Caco-2 (cell line): ENCODE measurements at regions of chr11 and their contacts with region 1.

Region 1: GRCh38 chr11:123995119-123995518 is at the start of gene OR10G6:
- DNase-seq: no peak
- H3K4me3 ChIP-seq: no peak within 1 kb of the TSS
- H3K4me3 Mint-ChIP-seq: no peak within 1 kb of the TSS
- H3K27ac Mint-ChIP-seq: no peak within 1 kb of the TSS
- H3K4me1 ChIP-seq: peaks cover 8% of the 10 kb centered on the region; the same call in 1 of the 2 replicates
- H3K4me1 Mint-ChIP-seq: no peaks in the 10 kb centered on the region
- H3K27me3 ChIP-seq: 0 out of 2 replicates have a peak, but pooled peaks cover 2% of the 10 kb centered on the region
- H3K27me3 Mint-ChIP-seq: peaks cover 3% of the 10 kb centered on the region
- CTCF ChIP-seq: no peak
- total RNA-seq, gene OR10G6: not detected in 2 replicates

Region 2: DNA sequence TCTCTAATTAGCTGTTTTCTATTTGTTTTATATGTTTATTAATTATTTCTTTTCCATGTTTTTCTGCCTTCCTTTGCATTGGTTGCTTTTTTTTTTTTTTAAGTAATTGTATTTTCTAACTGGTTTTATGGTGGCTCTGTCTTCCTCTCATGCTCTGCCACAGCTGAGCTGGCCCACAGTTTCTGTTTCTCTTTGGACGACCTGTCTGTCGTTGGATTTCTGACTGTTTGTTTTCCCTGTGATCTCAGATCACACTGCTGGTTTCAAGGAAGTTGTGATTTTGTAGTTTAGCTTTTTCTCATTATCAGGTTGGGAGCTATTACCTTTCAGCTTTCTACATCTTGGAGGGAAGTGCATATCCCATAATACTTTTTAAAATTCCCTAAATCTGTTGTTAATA is 173.1 kb before region 1 on chr11:
- CTCF ChIA-PET with region 1: no interaction called
- POLR2A ChIA-PET with region 1: no interaction called
- intact Hi-C with region 1: loop called (anchors 1 kb)
- DNase-seq: peak in 1 of 2 experiments; percentile 44
- H3K4me3 ChIP-seq: no peak overlapping the region
- H3K4me3 Mint-ChIP-seq: peak overlapping the region; percentile 54
- H3K27ac Mint-ChIP-seq: peak overlapping the region; percentile 91
- H3K4me1 ChIP-seq: peaks cover 24% of the 10 kb centered on the region
- H3K4me1 Mint-ChIP-seq: peaks cover 19% of the 10 kb centered on the region
- H3K27me3 ChIP-seq: no peaks in the 10 kb centered on the region
- H3K27me3 Mint-ChIP-seq: no peaks in the 10 kb centered on the region
- CTCF ChIP-seq: no peak

Region 3: DNA sequence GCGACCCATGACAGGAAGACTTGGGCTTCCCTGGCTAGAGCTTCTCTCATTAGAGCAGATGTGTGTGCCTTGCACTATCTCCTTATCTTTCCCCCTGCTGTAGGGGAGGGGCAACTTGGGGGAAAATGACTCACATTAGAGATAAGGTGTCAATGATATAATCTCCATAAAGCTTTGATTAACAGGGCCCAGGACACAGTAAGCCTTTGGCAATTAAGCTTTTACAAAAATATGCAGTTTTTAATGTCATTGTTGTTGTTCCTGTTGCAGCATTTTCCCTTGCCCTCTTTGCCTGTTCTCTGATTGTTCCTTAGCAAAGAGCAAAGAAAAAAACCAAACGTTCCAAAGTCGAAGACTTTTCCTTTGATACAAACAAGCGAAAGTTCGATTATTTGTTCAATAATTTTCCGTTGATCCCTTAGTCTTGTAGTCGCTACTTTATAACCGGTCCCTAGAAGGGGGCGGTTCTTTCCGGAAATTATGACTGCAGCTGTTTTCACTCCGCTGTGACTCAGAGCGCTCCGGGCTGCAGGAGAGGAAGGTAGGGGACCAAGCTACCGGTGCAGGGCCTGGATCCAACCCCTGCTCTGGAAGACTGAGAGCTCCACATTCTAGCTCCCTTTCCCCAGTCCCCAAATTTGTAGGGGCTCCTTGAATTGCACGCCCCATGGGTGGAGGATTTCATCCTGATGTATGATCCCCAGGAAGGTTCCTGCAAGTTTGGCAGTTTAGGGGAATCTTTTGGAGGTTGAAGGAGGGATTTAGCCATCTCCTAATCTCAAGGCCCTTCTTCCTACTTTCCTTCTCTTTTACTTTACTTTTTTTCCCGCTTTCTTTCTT is 120.0 kb after region 1 on chr11 and contains the start of gene VWA5A:
- CTCF ChIA-PET with region 1: no interaction called
- POLR2A ChIA-PET with region 1: no interaction called
- intact Hi-C with region 1: no loop called
- DNase-seq: peak; percentile 77 to 81
- H3K4me3 ChIP-seq: no peak within 1 kb of the TSS
- H3K4me3 Mint-ChIP-seq: peak within 1 kb of the TSS; percentile 54
- H3K27ac Mint-ChIP-seq: no peak within 1 kb of the TSS
- H3K4me1 ChIP-seq: peaks cover 5% of the 10 kb centered on the region; the same call in 1 of the 2 replicates
- H3K4me1 Mint-ChIP-seq: peaks cover 7% of the 10 kb centered on the region
- H3K27me3 ChIP-seq: no peaks in the 10 kb centered on the region
- H3K27me3 Mint-ChIP-seq: peaks cover 14% of the 10 kb centered on the region
- CTCF ChIP-seq: no peak
- total RNA-seq, gene VWA5A: 1.3 and 1.6 TPM in 2 replicates

Region 4: DNA sequence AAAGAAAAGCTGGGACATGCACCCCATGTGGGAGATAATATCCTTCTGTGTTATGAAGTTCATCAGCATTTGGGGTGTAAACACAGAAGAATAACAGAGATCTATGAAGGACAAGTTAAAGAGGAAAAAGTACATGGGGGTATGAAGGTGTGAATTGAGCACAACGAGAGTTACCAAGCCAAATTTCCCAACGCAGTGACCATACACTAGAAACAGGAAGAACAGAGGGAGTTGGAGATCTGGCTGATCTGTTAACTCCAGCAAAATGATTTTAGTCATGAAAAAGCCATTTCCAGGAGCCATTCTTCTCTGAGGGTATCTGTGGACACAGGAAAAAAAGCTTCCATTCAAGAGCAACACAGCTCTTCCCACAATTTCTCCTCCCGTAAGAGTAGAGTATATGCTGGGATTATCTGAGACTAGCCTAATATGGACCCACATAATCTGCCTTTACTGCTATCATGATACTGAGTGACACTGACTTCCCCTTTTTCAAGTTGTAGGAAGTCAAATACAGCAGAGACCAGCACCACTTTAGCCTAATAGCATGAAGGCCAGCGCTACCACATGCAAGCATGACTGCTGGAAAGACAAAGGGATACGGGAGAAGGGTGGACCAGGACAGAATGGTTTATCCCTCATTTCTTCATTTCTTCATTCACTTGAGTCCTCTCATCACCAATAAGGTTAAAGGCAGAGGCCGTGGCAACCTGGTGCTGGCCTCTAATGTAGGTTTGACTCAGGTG is 344.4 kb after region 1 on chr11:
- CTCF ChIA-PET with region 1: no interaction called
- POLR2A ChIA-PET with region 1: no interaction called
- intact Hi-C with region 1: no loop called
- DNase-seq: no peak
- H3K4me3 ChIP-seq: no peak overlapping the region
- H3K4me3 Mint-ChIP-seq: no peak overlapping the region
- H3K27ac Mint-ChIP-seq: no peak overlapping the region
- H3K4me1 ChIP-seq: no peaks in the 10 kb centered on the region
- H3K4me1 Mint-ChIP-seq: no peaks in the 10 kb centered on the region
- H3K27me3 ChIP-seq: no peaks in the 10 kb centered on the region
- H3K27me3 Mint-ChIP-seq: peaks cover 4% of the 10 kb centered on the region
- CTCF ChIP-seq: no peak